CD8-positive, alpha-beta memory T cell (primary cell): ENCODE measurements at regions of chr1 and their contacts with region 1.

Region 1: DNA sequence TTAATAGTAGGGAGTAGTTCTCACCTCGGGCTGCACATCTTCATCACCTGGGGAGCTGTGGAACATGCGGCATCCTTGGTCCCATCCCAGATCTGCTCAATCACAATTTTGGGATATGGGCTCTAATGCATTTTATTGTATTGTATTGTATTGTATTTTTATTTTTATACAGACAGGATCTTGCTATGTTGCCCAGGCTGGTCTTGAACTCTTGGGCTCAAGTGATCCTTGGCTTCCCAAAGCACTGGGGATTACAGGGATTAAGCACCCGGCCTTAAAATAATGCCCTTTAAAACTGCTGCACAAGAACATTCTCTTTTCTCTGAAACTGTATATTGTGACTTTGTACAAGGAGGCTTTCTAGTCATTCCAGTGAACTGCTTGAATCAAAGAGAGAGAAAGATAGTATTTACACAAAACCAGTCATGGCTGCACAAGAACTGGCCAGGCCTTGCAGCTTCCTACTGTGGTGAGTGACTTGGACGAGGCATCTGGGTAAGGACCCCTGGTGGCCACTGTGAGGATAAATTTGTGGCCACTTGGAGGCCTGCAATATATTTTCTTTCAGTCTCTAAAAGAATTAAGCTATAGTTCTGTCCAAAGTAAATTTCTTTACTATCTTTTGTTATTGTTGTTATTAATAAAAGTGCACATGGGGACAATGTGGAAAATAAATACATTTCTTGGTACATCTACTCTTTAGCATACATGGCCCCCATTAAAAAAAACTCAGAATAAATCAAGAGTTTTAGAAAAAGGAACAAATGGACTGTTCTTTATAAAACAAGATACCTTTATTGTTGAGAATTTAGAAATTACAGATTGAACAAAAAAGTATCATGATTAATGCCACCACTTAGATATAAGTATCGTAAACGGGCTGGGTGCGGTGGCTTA is 48.0 kb downstream of the TBCE start:
- DNase-seq: peak; percentile 37 to 66 (median 39)
- H3K4me3 ChIP-seq: no peak overlapping the region
- H3K4me3 Mint-ChIP-seq: no peak overlapping the region
- H3K27ac ChIP-seq: no peak overlapping the region
- H3K27ac Mint-ChIP-seq: peak overlapping the region in 2 of 8 donors; percentile 1 to 76
- H3K4me1 ChIP-seq: no peaks in the 10 kb centered on the region
- H3K4me1 Mint-ChIP-seq: peaks cover 6 to 8% (median 6%) of the 10 kb centered on the region in 3 donors
- H3K27me3 ChIP-seq: no peaks in the 10 kb centered on the region
- H3K27me3 Mint-ChIP-seq: no peaks in the 10 kb centered on the region

Region 2: GRCh38 chr1:235105051-235106043 is 309.9 kb before region 1 on chr1:
- CTCF ChIA-PET with region 1: interaction called, 23 read pairs
- POLR2A ChIA-PET with region 1: no interaction called
- DNase-seq: peak in 1 of 5 donors; percentile 39
- H3K4me3 ChIP-seq: peak overlapping the region; percentile 59
- H3K4me3 Mint-ChIP-seq: peak overlapping the region; percentile 84 to 93 (median 87)
- H3K27ac ChIP-seq: peak overlapping the region; percentile 26
- H3K27ac Mint-ChIP-seq: peak overlapping the region; percentile 69 to 95 (median 89)
- H3K4me1 ChIP-seq: peaks cover 24% of the 10 kb centered on the region
- H3K4me1 Mint-ChIP-seq: peaks cover 27 to 46% (median 34%) of the 10 kb centered on the region in 3 donors
- H3K27me3 ChIP-seq: no peaks in the 10 kb centered on the region
- H3K27me3 Mint-ChIP-seq: peaks cover 0 to 1% of the 10 kb centered on the region in 2 donors

Region 3: DNA sequence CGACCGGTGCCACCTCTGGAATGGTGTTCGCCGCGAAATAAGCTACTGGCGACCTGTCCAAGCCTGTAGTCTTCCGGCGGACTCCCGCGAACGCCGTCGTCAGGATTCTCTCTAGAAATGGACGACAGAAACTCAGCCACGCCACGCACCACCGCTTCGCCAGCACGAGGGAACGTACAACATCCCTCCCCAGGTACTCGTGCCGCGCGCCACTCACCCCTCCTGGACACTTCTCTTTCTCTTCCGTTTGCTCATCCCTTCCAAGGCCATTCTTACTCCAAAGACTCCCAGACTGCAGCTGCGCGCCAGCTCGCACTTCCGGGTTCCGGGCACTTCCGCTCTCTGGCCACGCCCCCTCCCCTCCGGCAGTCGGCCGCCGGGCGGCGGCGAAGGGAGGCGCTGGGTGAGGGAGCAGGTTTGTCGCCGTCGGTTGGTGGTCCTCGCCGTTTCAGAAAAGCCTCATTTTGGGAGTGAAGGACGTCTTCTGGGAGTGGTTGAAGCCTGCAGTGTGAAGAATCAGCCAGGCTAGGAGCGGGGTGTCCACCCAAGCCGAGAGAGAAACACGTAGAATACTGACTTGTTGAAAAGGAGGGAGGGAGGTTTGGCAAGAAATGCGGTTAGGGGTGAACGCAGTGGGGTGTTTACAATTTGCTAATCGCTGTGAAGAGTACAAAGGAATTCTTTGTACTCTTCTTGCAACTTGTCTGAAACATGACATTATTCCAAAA is 254.1 kb before region 1 on chr1 and contains the start of gene RBM34:
- CTCF ChIA-PET with region 1: interaction called, 12 read pairs
- POLR2A ChIA-PET with region 1: no interaction called
- DNase-seq: peak; percentile 90 to 95 (median 92)
- H3K4me3 ChIP-seq: peak within 1 kb of the TSS; percentile 91
- H3K4me3 Mint-ChIP-seq: peak within 1 kb of the TSS; percentile 95 to 98 (median 96)
- H3K27ac ChIP-seq: peak within 1 kb of the TSS; percentile 94
- H3K27ac Mint-ChIP-seq: peak within 1 kb of the TSS; percentile 94 to 99 (median 98)
- H3K4me1 ChIP-seq: peaks cover 45% of the 10 kb centered on the region
- H3K4me1 Mint-ChIP-seq: peaks cover 26 to 28% (median 26%) of the 10 kb centered on the region in 3 donors
- H3K27me3 ChIP-seq: no peaks in the 10 kb centered on the region
- H3K27me3 Mint-ChIP-seq: no peaks in the 10 kb centered on the region
- total RNA-seq, gene RBM34: 121 to 130 TPM

Region 4: GRCh38 chr1:235253219-235253962 is 161.9 kb before region 1 on chr1:
- CTCF ChIA-PET with region 1: interaction called, 16 read pairs
- POLR2A ChIA-PET with region 1: no interaction called
- DNase-seq: peak; percentile 33 to 76 (median 61)
- H3K4me3 ChIP-seq: no peak overlapping the region
- H3K4me3 Mint-ChIP-seq: no peak overlapping the region
- H3K27ac ChIP-seq: no peak overlapping the region
- H3K27ac Mint-ChIP-seq: peak overlapping the region in 5 of 8 donors; percentile 23 to 96 (median 68)
- H3K4me1 ChIP-seq: no peaks in the 10 kb centered on the region
- H3K4me1 Mint-ChIP-seq: peaks cover 39 to 62% (median 46%) of the 10 kb centered on the region in 3 donors
- H3K27me3 ChIP-seq: no peaks in the 10 kb centered on the region
- H3K27me3 Mint-ChIP-seq: no peaks in the 10 kb centered on the region

Region 5: GRCh38 chr1:235328357-235329138 is 86.7 kb before region 1 on chr1 and contains the start of gene GGPS1:
- CTCF ChIA-PET with region 1: interaction called, 12 read pairs
- POLR2A ChIA-PET with region 1: no interaction called
- DNase-seq: peak; percentile 95 to 99 (median 98)
- H3K4me3 ChIP-seq: peak within 1 kb of the TSS; percentile 89
- H3K4me3 Mint-ChIP-seq: no peak within 1 kb of the TSS
- H3K27ac ChIP-seq: peak within 1 kb of the TSS; percentile 93
- H3K27ac Mint-ChIP-seq: peak within 1 kb of the TSS in 4 of 8 donors; percentile 38 to 94 (median 82)
- H3K4me1 ChIP-seq: peaks cover 58% of the 10 kb centered on the region
- H3K4me1 Mint-ChIP-seq: peaks cover 28 to 37% (median 31%) of the 10 kb centered on the region in 3 donors
- H3K27me3 ChIP-seq: no peaks in the 10 kb centered on the region
- H3K27me3 Mint-ChIP-seq: peaks cover 0 to 4% of the 10 kb centered on the region in 2 donors
- total RNA-seq, gene GGPS1: 26.3 to 29.0 TPM

Region 6: GRCh38 chr1:235486321-235486720 is 71.1 kb after region 1 on chr1:
- CTCF ChIA-PET with region 1: no interaction called
- POLR2A ChIA-PET with region 1: no interaction called
- DNase-seq: no peak
- H3K4me3 ChIP-seq: no peak overlapping the region
- H3K4me3 Mint-ChIP-seq: no peak overlapping the region
- H3K27ac ChIP-seq: no peak overlapping the region
- H3K27ac Mint-ChIP-seq: no peak overlapping the region
- H3K4me1 ChIP-seq: no peaks in the 10 kb centered on the region
- H3K4me1 Mint-ChIP-seq: no peaks in the 10 kb centered on the region
- H3K27me3 ChIP-seq: no peaks in the 10 kb centered on the region
- H3K27me3 Mint-ChIP-seq: no peaks in the 10 kb centered on the region